Brain microvascular endothelial cell (primary cell): ENCODE measurements at regions of chr17 and their contacts with region 1.

Region 1: DNA sequence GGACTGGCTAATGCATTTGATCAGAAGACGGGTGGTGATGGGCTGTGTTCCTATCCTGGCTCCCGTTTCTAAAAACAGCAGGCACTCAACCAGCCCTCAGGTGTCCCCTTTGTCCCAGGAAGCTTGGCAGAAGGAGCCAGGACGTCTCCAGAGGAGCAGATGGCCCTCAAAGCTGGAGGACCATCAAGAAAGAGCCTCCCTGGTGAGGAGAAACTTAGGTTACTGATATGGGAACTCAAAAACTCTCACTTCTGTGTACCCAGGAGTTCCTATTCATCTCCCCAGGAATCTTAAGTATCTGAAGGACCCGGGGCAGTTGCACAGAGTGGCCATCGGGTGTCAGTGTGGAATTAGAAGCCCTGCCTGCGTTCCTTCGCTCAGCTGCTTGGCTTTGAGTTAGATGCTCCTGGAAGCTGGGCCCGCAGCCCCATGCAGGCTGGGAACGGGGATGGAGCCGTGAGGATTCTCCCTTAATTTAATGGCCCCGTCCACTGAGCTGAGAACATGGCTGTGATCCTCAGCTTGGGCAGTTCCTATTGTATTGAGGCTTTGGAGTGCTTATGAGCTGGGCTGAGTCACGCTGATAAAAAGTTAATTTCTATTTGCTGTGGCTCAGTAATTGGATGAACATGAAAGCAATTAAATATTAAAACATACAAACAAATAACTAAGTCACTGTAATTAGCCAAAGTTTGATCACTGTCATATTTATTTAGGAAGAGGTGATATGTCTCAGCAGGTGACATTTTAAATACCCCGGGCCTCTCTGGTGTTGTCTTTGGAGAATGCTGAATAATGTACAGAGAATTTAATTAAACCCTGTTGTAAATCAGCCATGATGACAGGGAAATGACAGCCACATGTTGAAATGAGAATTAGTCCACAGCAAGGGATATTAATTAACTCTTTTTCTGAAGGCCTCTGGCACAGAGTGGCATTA is 402.1 kb downstream of the SEC14L1 start:
- DNase-seq: peak; percentile 78
- H3K4me3 ChIP-seq: no peak overlapping the region
- H3K27ac ChIP-seq: no peak overlapping the region
- H3K27me3 ChIP-seq: peaks cover 11% of the 10 kb centered on the region
- CTCF ChIP-seq: peak; percentile 97

Region 2: GRCh38 chr17:77704048-77704815 is 161.4 kb after region 1 on chr17:
- in situ Hi-C with region 1: no loop called
- DNase-seq: no peak
- H3K4me3 ChIP-seq: no peak overlapping the region
- H3K27ac ChIP-seq: no peak overlapping the region
- H3K27me3 ChIP-seq: no peaks in the 10 kb centered on the region
- CTCF ChIP-seq: no peak

Region 3: DNA sequence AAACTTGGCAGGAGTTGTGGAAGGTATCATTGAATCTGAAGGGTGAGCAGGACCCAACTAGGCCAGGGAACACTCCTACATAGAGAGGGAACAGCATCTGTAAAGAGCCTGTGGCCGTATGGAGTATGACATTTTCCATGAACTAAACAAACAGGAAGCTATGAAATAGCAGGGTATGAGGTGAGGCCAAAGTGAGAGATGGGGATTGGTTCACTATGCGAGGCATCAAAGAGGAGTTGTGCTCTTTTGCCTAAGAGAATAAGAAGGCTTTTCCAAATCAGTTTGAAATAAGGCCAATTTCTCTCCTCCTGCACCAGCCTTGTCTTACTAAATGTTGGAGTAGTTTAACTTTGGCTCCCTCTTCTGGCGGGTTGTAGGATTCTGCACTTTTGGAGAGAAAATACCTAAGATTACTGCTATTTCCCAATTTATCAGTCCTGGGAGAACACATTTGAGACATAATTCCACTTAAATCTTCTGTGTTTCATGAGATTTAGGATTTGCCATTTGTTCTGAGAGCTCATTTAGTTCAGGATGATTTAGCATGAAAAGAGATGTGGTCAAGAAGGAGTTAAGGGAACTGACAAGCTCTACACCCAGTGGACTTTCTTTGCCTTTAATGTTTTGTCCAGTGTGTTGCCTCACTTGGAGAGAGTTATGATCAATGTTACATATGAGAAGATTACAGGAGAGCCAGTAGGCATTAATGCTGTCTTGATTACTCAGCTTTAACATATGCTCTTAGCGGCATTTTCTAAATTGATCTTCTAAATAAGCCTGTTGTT is 471.1 kb after region 1 on chr17:
- in situ Hi-C with region 1: loop called (anchors 25 kb)
- DNase-seq: peak; percentile 65
- H3K4me3 ChIP-seq: no peak overlapping the region
- H3K27ac ChIP-seq: no peak overlapping the region
- H3K27me3 ChIP-seq: no peaks in the 10 kb centered on the region
- CTCF ChIP-seq: peak; percentile 74